ENCODE measurements at regions of chr6 and their contacts with region 1.

Region 1: DNA sequence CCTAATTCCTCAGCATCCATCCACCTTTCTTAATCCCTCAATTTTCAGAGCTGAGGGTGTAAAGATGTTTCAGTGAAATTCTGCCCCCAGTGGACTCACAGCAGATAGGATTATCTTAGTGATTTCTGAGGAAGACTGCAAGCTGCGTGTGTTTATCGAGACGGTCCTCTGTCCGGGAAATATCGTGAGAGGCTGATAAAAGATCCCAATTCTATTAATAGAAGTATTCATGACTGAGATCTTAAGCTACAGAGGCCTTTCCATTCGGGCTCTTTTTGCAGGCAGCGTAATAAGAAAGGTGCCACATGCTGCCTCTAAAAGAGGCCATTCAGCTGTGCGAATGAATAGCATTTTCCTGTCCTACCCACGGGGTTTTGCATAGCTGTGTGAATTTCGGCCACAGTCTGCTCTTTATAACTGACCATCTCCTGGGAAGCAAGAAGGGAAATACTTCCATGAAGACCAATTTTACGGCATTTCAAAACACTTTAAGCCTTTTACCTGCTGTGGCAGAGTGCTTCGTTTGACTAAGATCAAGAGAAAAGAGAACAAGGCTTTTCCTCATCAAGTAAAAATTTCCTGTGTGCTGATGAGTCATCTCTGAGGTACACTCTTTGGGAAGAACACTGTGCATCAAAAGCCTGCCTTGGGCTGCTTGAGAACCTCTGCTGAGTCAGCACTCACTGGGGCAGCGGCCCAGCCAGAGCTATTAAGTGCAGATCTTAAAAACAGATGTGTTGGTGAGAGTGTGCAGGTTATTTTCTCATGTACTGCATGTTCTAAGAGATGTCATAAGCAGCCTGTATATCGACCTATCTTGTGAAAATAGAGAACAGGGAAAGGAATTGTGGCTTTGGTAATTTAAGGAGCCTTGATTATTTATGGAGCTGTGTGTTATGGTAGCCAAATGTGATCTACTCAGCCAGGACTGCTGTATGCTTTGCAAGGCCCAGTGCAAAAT is 208.7 kb downstream of the ARHGAP18 start:
- DNase-seq: peak; percentile 57 to 62
- H3K4me3 ChIP-seq: no peak overlapping the region
- H3K4me1 ChIP-seq: peaks cover 40% of the 10 kb centered on the region
- H3K27me3 ChIP-seq: no peaks in the 10 kb centered on the region

Region 2: DNA sequence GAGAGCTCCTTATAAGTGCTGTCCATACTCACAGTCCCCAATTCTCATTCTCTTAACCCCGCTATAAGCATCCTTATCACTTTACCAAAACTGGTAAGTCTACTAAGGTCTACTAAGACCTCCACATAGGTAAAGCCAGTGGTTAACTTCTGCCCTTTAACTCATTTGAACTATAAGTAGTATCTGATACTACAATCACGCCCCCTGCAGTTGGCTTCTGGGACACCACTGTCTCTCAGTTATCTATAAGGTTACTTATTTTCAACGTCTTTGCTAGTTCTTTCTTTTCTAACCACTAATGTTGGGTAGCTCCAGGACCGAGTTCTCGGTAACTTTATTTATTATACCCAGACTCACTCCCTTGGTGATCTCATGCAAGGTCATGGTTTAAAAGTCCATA is 66.1 kb after region 1 on chr6:
- in situ Hi-C with region 1: loop called (anchors 10 kb)
- DNase-seq: peak; percentile 33 to 76
- H3K4me3 ChIP-seq: no peak overlapping the region
- H3K4me1 ChIP-seq: no peaks in the 10 kb centered on the region
- H3K27me3 ChIP-seq: no peaks in the 10 kb centered on the region; the same call in 1 of the 2 replicates